ENCODE measurements at regions of chr2 and their contacts with region 1.

Region 1: DNA sequence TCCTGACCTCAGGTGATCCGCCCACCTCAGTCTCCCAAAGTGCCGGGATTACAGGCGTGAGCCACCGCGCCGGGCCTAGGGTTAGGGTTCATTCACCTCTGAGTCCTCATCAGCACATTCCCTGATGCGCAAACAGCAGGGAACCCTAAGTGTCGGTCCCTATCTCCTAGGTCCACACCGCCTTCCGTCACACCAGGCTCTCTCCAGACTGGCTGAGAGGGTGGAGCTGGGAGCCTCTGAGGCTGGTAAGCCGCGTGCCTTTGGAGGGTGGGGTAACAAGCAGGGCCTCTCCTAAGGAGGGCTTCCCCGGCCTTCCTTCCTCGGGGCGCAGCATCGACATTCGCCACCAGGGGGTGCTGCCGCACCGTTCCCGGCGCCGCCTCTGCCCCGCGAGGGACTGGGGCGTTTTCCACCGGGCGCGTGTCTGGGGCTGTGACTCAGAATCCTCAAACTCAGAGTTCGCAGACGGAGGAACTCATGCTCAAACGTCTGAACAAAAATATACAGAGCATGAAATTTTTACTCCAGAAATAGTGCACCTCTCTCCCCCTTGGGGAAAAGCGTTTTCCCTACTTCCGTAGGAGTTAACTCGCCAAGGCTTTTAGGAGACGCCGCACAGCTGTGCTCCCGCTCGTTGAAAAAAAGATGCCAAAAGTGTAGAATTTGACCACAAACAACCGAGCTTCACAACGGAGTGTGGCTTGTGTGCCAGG is 63.9 kb upstream of the ASAP2 start:
- DNase-seq: peak; percentile 90
- ATAC-seq: peak; percentile 93
- H3K4me3 Mint-ChIP-seq: no peak overlapping the region
- H3K27ac Mint-ChIP-seq: no peak overlapping the region
- H3K4me1 Mint-ChIP-seq: no peaks in the 10 kb centered on the region
- H3K27me3 Mint-ChIP-seq: peaks cover 14% of the 10 kb centered on the region

Region 2: GRCh38 chr2:8872821-8873432 is 269.8 kb before region 1 on chr2:
- CTCF ChIA-PET with region 1: interaction called, 6 read pairs
- POLR2A ChIA-PET with region 1: no interaction called
- intact Hi-C with region 1: loop called (anchors 1 kb)
- DNase-seq: no peak
- ATAC-seq: peak; percentile 44
- H3K4me3 Mint-ChIP-seq: no peak overlapping the region
- H3K27ac Mint-ChIP-seq: no peak overlapping the region
- H3K4me1 Mint-ChIP-seq: no peaks in the 10 kb centered on the region
- H3K27me3 Mint-ChIP-seq: peaks cover 4% of the 10 kb centered on the region

Region 3: DNA sequence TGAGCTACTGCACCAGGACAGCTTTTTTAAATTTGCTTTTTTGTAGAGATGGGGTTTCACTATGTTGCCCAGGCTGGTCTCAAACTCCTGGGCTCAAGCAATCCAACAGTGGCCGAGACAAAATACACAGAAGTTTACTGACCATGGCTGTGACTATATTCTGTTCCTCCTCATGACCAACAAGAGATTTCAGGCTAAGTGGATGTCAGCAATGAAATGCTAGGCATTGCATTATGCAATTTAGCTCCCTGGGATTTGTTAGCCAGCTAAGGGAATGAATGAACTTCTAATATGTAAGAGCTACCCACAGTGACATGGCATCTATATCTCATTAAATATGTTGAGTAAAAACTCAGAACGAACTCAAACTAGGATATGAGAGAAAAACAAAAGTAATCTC is 57.4 kb before region 1 on chr2:
- CTCF ChIA-PET with region 1: no interaction called
- POLR2A ChIA-PET with region 1: no interaction called
- intact Hi-C with region 1: no loop called
- DNase-seq: no peak
- ATAC-seq: no peak
- H3K4me3 Mint-ChIP-seq: no peak overlapping the region
- H3K27ac Mint-ChIP-seq: no peak overlapping the region
- H3K4me1 Mint-ChIP-seq: no peaks in the 10 kb centered on the region
- H3K27me3 Mint-ChIP-seq: no peaks in the 10 kb centered on the region

Region 4: GRCh38 chr2:9205963-9206948 is 63.5 kb after region 1 on chr2 and contains the start of gene ASAP2:
- CTCF ChIA-PET with region 1: interaction called, 18 read pairs
- POLR2A ChIA-PET with region 1: no interaction called
- intact Hi-C with region 1: loop called in 1 of 2 experiments (anchors 2 kb)
- DNase-seq: peak; percentile 70
- ATAC-seq: peak; percentile 74
- H3K4me3 Mint-ChIP-seq: peak within 1 kb of the TSS; percentile 62
- H3K27ac Mint-ChIP-seq: no peak within 1 kb of the TSS
- H3K4me1 Mint-ChIP-seq: peaks cover 11% of the 10 kb centered on the region
- H3K27me3 Mint-ChIP-seq: peaks cover 43% of the 10 kb centered on the region
- total RNA-seq, gene ASAP2: 0.21 to 0.26 TPM

Region 5: GRCh38 chr2:9333591-9334171 is 191.0 kb after region 1 on chr2:
- CTCF ChIA-PET with region 1: interaction called, 3 read pairs
- POLR2A ChIA-PET with region 1: no interaction called
- intact Hi-C with region 1: loop called (anchors 1 to 10 kb)
- DNase-seq: peak; percentile 53
- ATAC-seq: peak; percentile 36
- H3K4me3 Mint-ChIP-seq: no peak overlapping the region
- H3K27ac Mint-ChIP-seq: no peak overlapping the region
- H3K4me1 Mint-ChIP-seq: peaks cover 19% of the 10 kb centered on the region
- H3K27me3 Mint-ChIP-seq: peaks cover 1% of the 10 kb centered on the region

Region 6: DNA sequence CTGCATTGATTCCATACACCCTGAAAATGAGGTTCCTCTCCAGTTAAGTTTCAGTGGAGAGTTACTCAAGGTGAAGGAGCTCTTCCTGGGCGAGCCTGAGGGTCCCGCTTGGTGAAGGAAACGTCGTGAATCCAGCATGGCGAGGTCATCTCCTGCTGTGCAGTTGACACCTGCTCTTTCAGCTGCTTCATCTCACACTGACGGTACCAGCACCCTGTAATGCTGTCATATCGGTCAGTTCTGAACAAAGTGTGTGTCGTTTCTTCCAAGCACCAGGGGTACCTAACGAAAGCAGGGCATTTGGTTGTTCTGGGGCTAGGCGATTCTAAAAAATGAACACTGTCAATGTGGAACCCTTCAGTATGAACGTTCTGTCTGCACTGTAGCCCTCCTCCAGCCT is 228.0 kb after region 1 on chr2:
- CTCF ChIA-PET with region 1: interaction called, 5 read pairs
- POLR2A ChIA-PET with region 1: no interaction called
- intact Hi-C with region 1: loop called (anchors 1 kb)
- DNase-seq: no peak
- ATAC-seq: peak; percentile 50
- H3K4me3 Mint-ChIP-seq: no peak overlapping the region
- H3K27ac Mint-ChIP-seq: peak overlapping the region; percentile 30
- H3K4me1 Mint-ChIP-seq: peaks cover 13% of the 10 kb centered on the region
- H3K27me3 Mint-ChIP-seq: peaks cover 5% of the 10 kb centered on the region

Region 7: DNA sequence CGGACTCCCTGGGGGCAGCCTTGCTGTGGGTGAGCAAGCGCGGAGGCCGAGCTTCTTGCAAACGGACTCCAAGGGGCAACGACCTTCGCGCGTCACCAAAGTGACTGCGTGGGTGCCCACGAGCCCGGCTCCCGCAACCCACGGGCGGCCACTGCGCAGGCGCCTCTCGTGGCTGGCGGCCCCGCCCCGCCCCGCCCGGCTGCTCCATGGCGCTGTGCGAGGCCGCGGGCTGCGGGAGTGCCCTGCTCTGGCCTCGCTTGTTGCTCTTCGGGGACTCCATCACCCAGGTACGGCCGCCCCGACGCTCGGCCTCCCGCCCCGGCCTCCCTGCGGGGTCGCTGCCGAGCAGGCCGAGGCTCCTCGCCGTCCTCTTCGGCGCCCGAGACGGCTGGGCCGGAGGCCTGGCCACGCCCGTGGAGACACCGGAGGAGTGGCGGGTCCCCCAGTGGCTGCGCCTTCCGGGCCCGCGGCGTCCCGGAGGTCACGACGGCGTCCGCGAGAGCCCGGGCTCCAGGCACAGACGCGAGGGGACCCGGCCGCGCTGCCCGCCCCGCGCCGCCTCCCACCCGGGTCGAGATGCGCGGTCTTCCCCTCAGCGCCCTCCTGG is 331.8 kb after region 1 on chr2 and contains the start of gene IAH1:
- CTCF ChIA-PET with region 1: interaction called, 4 read pairs
- POLR2A ChIA-PET with region 1: no interaction called
- intact Hi-C with region 1: loop called in 1 of 2 experiments (anchors 10 kb)
- DNase-seq: peak; percentile 81
- ATAC-seq: peak; percentile 81
- H3K4me3 Mint-ChIP-seq: peak within 1 kb of the TSS; percentile 79
- H3K27ac Mint-ChIP-seq: peak within 1 kb of the TSS; percentile 75
- H3K4me1 Mint-ChIP-seq: peaks cover 42% of the 10 kb centered on the region
- H3K27me3 Mint-ChIP-seq: no peaks in the 10 kb centered on the region
- total RNA-seq, gene IAH1: 53.7 to 63.7 TPM

Region 8: DNA sequence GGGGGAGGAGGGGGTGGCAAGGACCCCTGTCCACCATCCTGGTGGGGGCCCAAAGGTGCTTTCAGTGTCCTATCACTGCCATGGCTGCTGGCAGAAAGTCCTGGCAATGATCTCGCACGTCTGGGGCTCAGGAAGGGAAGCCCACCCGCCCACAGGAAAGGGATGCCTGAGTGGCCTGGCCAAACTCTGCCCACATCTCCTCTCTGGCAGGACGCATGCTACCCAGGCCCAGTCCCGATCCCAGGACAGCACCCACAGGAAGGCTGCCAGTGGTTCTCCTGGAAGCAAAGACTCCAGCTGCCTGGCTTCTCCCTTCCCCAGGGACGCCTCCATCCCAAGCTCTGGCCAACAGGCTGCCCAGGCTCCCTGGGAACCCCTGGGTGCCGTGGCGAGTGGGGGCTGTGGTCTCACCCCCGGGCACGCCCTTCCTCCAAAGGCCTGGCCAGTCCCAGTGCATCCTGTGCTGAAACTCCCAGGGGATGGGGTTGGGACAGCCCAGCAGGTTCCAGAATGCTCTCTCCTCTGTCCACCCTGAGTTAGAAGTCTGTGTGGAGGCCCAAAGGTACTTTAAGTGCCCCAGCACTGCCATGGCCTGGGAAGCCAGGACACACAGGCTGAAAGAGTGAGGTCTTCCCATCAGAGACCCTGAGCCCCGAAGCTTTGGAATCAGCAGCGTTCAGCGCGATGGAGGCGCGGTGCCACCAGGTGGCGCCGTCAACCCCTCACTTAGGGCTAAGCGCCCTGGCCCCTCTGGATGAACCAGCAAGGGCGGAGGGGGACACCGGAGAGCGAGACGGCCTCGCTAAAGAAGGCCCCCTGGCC is 670.8 kb after region 1 on chr2:
- CTCF ChIA-PET with region 1: interaction called, 3 read pairs
- POLR2A ChIA-PET with region 1: no interaction called
- intact Hi-C with region 1: loop called in 1 of 2 experiments (anchors 5 kb)
- DNase-seq: peak; percentile 84
- ATAC-seq: peak; percentile 90
- H3K4me3 Mint-ChIP-seq: no peak overlapping the region
- H3K27ac Mint-ChIP-seq: no peak overlapping the region
- H3K4me1 Mint-ChIP-seq: peaks cover 9% of the 10 kb centered on the region
- H3K27me3 Mint-ChIP-seq: peaks cover 3% of the 10 kb centered on the region

Region 9: DNA sequence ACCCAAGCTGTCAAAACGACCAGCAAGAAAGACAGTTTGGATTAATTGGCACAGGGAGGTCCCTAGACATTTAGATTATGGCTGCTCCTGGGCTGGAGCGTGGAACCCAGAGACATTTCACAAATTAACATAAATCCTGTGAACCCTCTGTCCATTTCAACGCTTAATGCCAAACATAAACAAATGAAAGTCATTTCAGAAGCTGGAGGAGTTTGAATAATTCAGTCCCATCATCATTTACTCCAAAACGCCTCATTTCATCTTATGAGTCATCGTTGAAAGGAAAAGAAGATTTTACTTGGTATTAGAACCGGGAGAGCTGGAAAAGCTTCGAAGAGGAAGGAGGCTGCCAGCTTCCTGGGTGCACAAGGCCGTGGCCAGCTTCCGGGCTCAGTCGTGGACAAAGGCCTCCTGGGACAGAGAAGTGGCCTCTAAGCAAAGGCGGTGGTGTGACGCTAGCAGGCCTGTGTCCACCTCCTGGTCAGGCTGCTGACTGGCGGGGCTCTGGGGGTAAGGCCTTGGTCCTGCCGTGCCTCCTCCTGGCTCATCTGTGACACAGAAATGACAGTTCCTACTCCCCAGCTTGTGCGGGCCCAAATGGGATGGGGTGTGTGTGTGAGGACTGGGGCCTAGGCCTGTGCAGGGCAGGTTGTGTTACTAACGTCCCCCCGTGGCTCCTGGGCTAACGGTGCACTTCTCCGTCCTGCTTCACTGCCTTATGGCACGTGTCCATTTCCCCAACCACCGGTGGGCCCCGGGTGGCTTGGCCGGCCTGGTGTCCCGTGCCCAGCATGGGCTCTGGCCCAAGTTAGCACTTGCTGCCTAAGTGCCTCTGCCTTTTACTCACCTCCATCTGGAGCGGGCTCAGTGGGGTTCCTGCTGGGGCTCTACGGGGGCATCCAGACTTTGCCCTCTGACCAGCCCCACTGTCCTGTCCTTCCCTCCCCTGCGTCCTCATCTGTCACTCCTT is 1051.4 kb after region 1 on chr2:
- CTCF ChIA-PET with region 1: no interaction called
- POLR2A ChIA-PET with region 1: no interaction called
- intact Hi-C with region 1: no loop called
- DNase-seq: no peak
- ATAC-seq: no peak
- H3K4me3 Mint-ChIP-seq: no peak overlapping the region
- H3K27ac Mint-ChIP-seq: no peak overlapping the region
- H3K4me1 Mint-ChIP-seq: no peaks in the 10 kb centered on the region
- H3K27me3 Mint-ChIP-seq: no peaks in the 10 kb centered on the region